WTC11 (cell line): ENCODE measurements at regions of chr7 and their contacts with region 1.

Region 1: GRCh38 chr7:50418086-50418515 is 32.0 kb downstream of the FIGNL1 start:
- DNase-seq: peak; percentile 89
- ATAC-seq: peak; percentile 96
- H3K4me3 Mint-ChIP-seq: no peak overlapping the region
- H3K27ac Mint-ChIP-seq: no peak overlapping the region
- H3K4me1 Mint-ChIP-seq: peaks cover 45% of the 10 kb centered on the region
- H3K27me3 Mint-ChIP-seq: peaks cover 3% of the 10 kb centered on the region; the same call in 1 of the 2 replicates
- CTCF ChIP-seq: peak; percentile 77

Region 2: GRCh38 chr7:50092579-50093491 is 325.3 kb before region 1 on chr7 and contains the start of gene ZPBP:
- CTCF ChIA-PET with region 1: interaction called, 15 read pairs
- POLR2A ChIA-PET with region 1: no interaction called
- DNase-seq: peak; percentile 41
- ATAC-seq: peak; percentile 82
- H3K4me3 Mint-ChIP-seq: peak within 1 kb of the TSS; percentile 77
- H3K27ac Mint-ChIP-seq: peak within 1 kb of the TSS; percentile 33; the same call in 1 of the 2 replicates
- H3K4me1 Mint-ChIP-seq: peaks cover 3% of the 10 kb centered on the region
- H3K27me3 Mint-ChIP-seq: peaks cover 15% of the 10 kb centered on the region
- CTCF ChIP-seq: peak; percentile 77
- total RNA-seq, gene ZPBP: not detected in 3 replicates

Region 3: DNA sequence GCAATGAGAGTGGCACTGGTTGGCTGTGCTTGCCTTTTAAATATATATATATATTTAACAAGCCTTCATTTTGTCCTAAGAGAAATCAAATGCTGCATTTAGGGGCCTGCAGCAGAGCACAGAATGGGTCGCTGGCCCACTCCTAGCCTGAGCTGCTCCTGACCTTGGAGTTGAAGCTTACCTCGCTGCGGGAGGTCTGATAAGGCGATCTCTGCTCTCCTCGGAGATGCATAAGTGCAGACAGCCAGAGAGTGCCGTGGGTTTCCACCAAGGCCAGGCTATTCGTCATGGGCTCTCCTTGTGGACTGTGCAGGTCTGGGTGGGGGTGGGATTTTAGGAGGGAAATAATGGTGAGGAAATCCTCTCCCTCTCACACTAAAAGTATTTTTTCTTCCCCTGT is 213.1 kb before region 1 on chr7:
- CTCF ChIA-PET with region 1: interaction called, 14 read pairs
- POLR2A ChIA-PET with region 1: no interaction called
- DNase-seq: peak; percentile 24
- ATAC-seq: peak; percentile 58
- H3K4me3 Mint-ChIP-seq: no peak overlapping the region
- H3K27ac Mint-ChIP-seq: no peak overlapping the region
- H3K4me1 Mint-ChIP-seq: peaks cover 12% of the 10 kb centered on the region
- H3K27me3 Mint-ChIP-seq: no peaks in the 10 kb centered on the region; the same call in 1 of the 2 replicates
- CTCF ChIP-seq: no peak

Region 4: DNA sequence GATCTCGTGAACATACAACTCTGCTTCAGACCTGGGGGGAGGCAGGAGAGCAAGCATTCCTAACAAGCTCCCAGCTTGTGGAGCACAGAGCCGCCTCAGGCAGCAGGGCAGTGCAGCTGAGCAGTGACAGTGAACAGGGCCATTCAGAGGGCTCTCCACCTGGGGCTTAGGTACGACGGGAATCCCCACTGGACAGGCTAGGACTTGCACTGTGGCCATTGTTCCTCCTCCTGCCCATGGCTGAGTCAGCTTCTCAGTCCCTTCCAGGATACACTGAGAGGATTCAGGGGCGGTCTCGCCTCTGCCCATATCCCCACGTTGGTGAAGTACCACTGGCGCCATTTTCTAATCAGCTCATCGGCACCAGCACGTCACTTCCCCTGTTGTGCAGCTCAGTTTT is 39.0 kb before region 1 on chr7:
- CTCF ChIA-PET with region 1: interaction called, 10 read pairs
- POLR2A ChIA-PET with region 1: no interaction called
- DNase-seq: peak; percentile 69
- ATAC-seq: peak; percentile 93
- H3K4me3 Mint-ChIP-seq: peak overlapping the region; percentile 54
- H3K27ac Mint-ChIP-seq: peak overlapping the region; percentile 96
- H3K4me1 Mint-ChIP-seq: peaks cover 71% of the 10 kb centered on the region
- H3K27me3 Mint-ChIP-seq: no peaks in the 10 kb centered on the region
- CTCF ChIP-seq: no peak

Region 5: GRCh38 chr7:50405221-50405620 is 12.9 kb before region 1 on chr7:
- CTCF ChIA-PET with region 1: interaction called, 18 read pairs
- POLR2A ChIA-PET with region 1: no interaction called
- DNase-seq: no peak
- ATAC-seq: no peak
- H3K4me3 Mint-ChIP-seq: no peak overlapping the region
- H3K27ac Mint-ChIP-seq: no peak overlapping the region
- H3K4me1 Mint-ChIP-seq: no peaks in the 10 kb centered on the region
- H3K27me3 Mint-ChIP-seq: peaks cover 6% of the 10 kb centered on the region
- CTCF ChIP-seq: no peak